ENCODE measurements at regions of chr4 and their contacts with region 1.

Region 1: GRCh38 chr4:8461051-8461450 is 20.5 kb downstream of the TRMT44 start:
- DNase-seq: no peak
- H3K4me3 ChIP-seq: no peak overlapping the region
- H3K27ac ChIP-seq: no peak overlapping the region
- H3K27me3 ChIP-seq: no peaks in the 10 kb centered on the region
- CTCF ChIP-seq: no peak

Region 2: DNA sequence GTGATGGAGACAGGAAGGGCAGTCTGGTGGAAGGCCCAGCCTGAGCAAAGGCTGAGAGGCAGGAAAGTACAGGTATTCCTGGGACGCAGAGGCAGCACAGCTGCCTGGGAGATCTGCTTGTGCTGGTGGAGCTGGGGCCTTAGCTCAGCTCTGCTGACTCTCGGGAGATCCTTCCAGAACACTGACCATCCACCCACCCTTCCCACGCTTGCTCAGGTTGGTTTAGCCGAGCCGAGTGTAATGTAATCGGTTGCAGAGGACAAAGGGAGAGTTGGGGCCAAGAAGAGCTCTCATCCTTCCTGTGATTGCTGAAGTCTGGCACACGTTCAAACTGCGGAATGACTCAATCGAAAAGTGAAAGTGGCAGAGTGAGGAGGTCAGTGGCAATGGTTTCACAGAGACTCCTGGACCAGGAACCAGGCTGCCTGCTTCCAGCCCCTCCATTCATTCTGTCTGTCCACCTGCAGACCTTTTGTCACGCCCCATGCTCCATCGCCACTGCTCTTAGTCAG is 76.0 kb after region 1 on chr4:
- CTCF ChIA-PET with region 1: no interaction called
- POLR2A ChIA-PET with region 1: no interaction called
- DNase-seq: peak; percentile 76
- H3K4me3 ChIP-seq: no peak overlapping the region
- H3K27ac ChIP-seq: peak overlapping the region; percentile 4
- H3K27me3 ChIP-seq: peaks cover 3% of the 10 kb centered on the region
- CTCF ChIP-seq: no peak

Region 3: DNA sequence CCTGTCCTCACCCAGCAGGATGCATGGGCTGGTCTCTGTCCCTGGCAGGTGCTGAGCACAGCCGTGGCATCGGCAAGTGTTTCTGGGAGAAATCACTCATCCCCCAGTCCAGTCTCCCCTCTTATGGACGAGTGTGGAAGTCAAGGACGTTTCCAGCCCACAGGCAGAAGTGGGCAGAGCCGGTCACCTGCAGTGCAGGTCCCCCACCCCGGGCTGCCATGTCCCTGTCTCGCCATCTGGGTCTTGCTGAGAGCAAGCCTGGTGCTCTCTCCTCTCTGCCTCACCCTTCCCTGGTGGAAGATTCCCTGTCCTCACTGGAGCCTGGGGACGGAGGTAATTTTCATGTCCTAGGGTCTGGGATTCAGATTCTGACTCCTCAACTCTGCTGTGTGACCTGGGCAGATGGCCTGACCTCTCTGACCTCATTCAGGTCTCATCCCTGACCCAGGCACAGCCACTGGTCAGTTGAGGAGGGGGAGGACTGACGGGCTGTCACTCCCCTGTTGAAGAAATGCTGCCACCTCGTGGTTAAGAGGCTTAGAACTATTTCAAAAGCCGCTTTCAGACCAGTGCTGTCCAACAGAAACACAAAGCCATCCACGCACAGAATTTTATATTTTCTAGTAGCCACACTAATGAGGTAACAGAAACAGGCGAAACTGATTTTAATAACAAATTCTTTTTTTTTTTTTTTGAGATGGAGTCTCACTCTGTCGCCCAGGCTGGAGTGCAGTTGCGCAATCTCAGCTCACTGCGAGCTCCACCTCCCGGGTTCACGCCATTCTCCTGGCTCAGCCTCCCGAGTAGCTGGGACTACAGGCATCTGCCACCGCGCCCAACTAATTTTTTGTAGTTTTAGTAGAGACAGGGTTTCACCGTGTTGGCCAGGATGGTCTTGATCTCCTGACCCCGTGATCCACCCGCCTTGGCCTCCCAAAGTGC is 133.3 kb after region 1 on chr4:
- CTCF ChIA-PET with region 1: no interaction called
- POLR2A ChIA-PET with region 1: interaction called, 10 read pairs
- DNase-seq: peak; percentile 33
- H3K4me3 ChIP-seq: peak overlapping the region; percentile 65; the same call in 1 of the 2 replicates
- H3K27ac ChIP-seq: no peak overlapping the region
- H3K27me3 ChIP-seq: peaks cover 50% of the 10 kb centered on the region
- CTCF ChIP-seq: peak; percentile 81

Measured in AG04450 (cell line).